ENCODE measurements at regions of chr3 and their contacts with region 1.

Region 1: GRCh38 chr3:119637679-119638525 is 22.5 kb downstream of the POPDC2 start:
- DNase-seq: peak; percentile 14
- ATAC-seq: peak; percentile 34
- H3K4me3 Mint-ChIP-seq: no peak overlapping the region
- H3K27ac Mint-ChIP-seq: peak overlapping the region; percentile 92
- H3K4me1 Mint-ChIP-seq: peaks cover 38% of the 10 kb centered on the region
- H3K27me3 Mint-ChIP-seq: no peaks in the 10 kb centered on the region

Region 2: GRCh38 chr3:119579366-119580165 is 58.3 kb before region 1 on chr3 and contains the start of gene ADPRH:
- CTCF ChIA-PET with region 1: interaction called, 4 read pairs
- POLR2A ChIA-PET with region 1: no interaction called
- intact Hi-C with region 1: loop called in 1 of 2 experiments (anchors 1 kb)
- DNase-seq: peak; percentile 75
- ATAC-seq: peak; percentile 79
- H3K4me3 Mint-ChIP-seq: peak within 1 kb of the TSS; percentile 79
- H3K27ac Mint-ChIP-seq: peak within 1 kb of the TSS; percentile 87
- H3K4me1 Mint-ChIP-seq: peaks cover 17% of the 10 kb centered on the region
- H3K27me3 Mint-ChIP-seq: peaks cover 4% of the 10 kb centered on the region
- total RNA-seq, gene ADPRH: 2.5 to 3.5 TPM

Region 3: GRCh38 chr3:119702530-119703157 is 64.7 kb after region 1 on chr3 and contains the start of gene CFAP91:
- CTCF ChIA-PET with region 1: no interaction called
- POLR2A ChIA-PET with region 1: interaction called, 3 read pairs
- intact Hi-C with region 1: loop called (anchors 1 kb)
- DNase-seq: peak; percentile 90
- ATAC-seq: peak; percentile 86
- H3K4me3 Mint-ChIP-seq: peak within 1 kb of the TSS; percentile 67
- H3K27ac Mint-ChIP-seq: peak within 1 kb of the TSS; percentile 59
- H3K4me1 Mint-ChIP-seq: peaks cover 39% of the 10 kb centered on the region
- H3K27me3 Mint-ChIP-seq: peaks cover 5% of the 10 kb centered on the region
- total RNA-seq, gene CFAP91: 0.25 to 0.67 TPM

Region 4: GRCh38 chr3:119745942-119746341 is 108.0 kb after region 1 on chr3:
- CTCF ChIA-PET with region 1: no interaction called
- POLR2A ChIA-PET with region 1: no interaction called
- intact Hi-C with region 1: no loop called
- DNase-seq: no peak
- ATAC-seq: no peak
- H3K4me3 Mint-ChIP-seq: no peak overlapping the region
- H3K27ac Mint-ChIP-seq: no peak overlapping the region
- H3K4me1 Mint-ChIP-seq: no peaks in the 10 kb centered on the region
- H3K27me3 Mint-ChIP-seq: peaks cover 29% of the 10 kb centered on the region